ENCODE measurements at regions of chr19 and their contacts with region 1.

Region 1: DNA sequence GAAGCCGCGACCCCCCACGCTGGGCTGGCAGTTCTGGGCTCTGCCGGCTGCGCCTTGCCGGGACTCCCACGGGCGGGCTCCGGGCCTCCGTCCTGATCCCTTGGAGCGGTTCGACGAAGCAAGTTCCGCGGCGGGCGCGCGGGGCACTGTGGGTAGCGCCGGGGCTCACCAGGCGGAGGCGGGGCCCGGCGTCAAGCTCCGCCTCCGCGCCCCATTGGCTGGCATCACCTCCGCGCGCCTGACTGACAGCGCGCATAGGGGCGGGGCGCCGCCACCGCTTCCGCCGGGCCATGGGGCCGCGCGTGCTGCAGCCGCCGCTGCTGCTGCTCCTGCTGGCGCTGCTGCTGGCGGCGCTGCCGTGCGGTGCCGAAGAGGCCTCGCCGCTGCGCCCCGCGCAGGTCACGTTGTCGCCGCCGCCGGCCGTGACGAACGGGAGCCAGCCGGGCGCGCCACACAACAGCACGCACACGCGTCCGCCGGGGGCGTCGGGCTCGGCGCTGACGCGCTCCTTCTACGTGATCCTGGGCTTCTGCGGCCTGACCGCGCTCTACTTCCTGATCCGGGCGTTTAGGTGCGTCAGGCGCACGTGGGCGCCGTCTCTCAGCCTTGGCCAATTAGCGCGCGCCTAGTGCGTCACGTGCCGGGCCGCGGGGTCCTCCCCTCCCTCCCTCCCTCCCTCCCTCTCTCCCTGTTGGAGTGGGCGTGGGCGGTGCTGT is at the start of gene FAM174C:
- DNase-seq: peak; percentile 96
- H3K4me3 Mint-ChIP-seq: peak within 1 kb of the TSS; percentile 87
- H3K27ac Mint-ChIP-seq: peak within 1 kb of the TSS; percentile 94
- H3K4me1 Mint-ChIP-seq: peaks cover 55% of the 10 kb centered on the region
- H3K27me3 Mint-ChIP-seq: no peaks in the 10 kb centered on the region
- total RNA-seq, gene FAM174C: 62.8 to 65.3 TPM

Region 2: DNA sequence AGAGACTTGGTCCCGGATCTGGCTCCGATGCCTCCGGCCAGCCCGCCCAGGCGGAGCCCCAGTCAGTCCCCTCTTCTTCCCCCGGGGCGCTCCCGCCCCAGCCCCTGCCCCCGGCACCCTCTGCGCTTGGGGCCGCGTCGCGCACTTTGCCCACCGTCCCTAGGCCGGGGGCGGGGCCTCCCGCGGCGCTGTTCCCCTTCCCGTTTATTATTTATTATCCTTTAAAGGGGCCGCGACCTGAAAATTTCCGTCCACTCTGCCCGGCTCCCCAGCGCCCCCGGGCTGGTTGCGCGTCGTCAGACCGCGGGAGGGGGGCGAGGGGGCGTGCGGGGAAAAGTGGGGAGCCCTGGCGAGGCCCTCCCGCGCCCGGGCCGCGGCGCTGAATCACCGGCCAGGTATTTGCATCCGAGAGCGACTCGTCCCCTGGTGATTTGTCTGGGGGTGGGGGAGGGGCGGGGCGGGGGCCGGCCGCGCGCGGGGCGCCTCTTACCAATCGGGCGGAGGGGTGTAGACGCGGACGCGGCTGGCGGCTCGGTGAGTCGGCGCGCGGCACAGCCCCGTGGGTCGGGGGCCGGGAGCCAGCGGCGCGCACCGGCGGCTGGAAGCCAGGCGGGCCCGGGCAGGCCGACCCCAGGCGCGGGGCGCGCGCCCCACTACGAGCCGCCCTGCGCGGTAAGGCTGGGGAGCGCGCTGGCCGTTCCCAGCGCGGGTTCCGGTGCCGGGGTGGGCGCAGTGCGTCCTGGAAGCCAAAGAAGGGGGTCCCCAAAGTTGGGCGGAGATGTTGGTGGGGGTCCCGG is 349.7 kb before region 1 on chr19 and contains the start of gene ARID3A:
- CTCF ChIA-PET with region 1: no interaction called
- intact Hi-C with region 1: no loop called
- DNase-seq: peak; percentile 76
- H3K4me3 Mint-ChIP-seq: peak within 1 kb of the TSS; percentile 73
- H3K27ac Mint-ChIP-seq: peak within 1 kb of the TSS; percentile 56
- H3K4me1 Mint-ChIP-seq: peaks cover 13% of the 10 kb centered on the region
- H3K27me3 Mint-ChIP-seq: no peaks in the 10 kb centered on the region
- total RNA-seq, gene ARID3A: 23.1 to 28.4 TPM

Region 3: GRCh38 chr19:1230585-1231489 is 44.6 kb before region 1 on chr19:
- CTCF ChIA-PET with region 1: no interaction called
- intact Hi-C with region 1: no loop called
- DNase-seq: no peak
- H3K4me3 Mint-ChIP-seq: no peak overlapping the region
- H3K27ac Mint-ChIP-seq: no peak overlapping the region
- H3K4me1 Mint-ChIP-seq: no peaks in the 10 kb centered on the region
- H3K27me3 Mint-ChIP-seq: no peaks in the 10 kb centered on the region

Region 4: GRCh38 chr19:1241417-1242095 is 33.9 kb before region 1 on chr19 and contains the start of gene ATP5F1D:
- CTCF ChIA-PET with region 1: interaction called, 25 read pairs
- intact Hi-C with region 1: no loop called
- DNase-seq: peak; percentile 94
- H3K4me3 Mint-ChIP-seq: peak within 1 kb of the TSS; percentile 84
- H3K27ac Mint-ChIP-seq: peak within 1 kb of the TSS; percentile 86
- H3K4me1 Mint-ChIP-seq: peaks cover 43% of the 10 kb centered on the region
- H3K27me3 Mint-ChIP-seq: peaks cover 10% of the 10 kb centered on the region
- total RNA-seq, gene ATP5F1D: 153 TPM

Region 5: DNA sequence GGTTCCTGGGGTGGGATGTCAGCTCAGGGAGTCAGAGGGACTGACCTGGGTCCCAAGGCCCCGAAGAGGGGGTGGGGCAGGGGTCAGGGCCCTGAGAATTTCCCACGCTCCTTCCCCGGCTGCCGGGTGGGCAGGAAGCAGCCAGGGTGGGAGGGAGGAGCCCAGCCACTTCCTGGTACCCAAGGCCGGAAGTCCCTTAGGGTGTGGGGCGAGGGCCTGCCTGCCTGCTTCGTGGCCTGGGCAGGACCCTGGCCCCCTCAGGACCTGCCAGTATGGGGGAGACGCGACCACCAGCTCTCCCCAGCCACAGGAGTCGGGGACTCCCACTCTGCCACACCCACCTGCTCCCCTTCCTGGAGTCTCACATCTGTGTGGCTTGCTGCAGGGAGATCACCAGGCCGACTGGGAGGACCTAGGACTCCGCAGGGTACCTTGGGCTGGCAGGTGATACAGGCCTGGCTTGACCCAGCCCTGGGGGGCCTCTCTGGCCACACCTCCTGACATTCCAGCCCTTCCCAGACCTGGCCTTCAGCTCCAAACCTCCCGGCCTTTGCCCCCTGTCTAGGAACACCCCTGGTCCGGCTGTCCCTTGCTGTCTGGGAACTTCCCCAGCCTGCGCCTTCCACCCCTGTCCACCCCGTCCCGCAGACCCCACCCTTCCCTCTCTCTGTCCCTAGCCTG is 16.1 kb before region 1 on chr19:
- CTCF ChIA-PET with region 1: no interaction called
- intact Hi-C with region 1: no loop called
- DNase-seq: peak; percentile 80
- H3K4me3 Mint-ChIP-seq: peak overlapping the region; percentile 92
- H3K27ac Mint-ChIP-seq: peak overlapping the region; percentile 97
- H3K4me1 Mint-ChIP-seq: peaks cover 49% of the 10 kb centered on the region
- H3K27me3 Mint-ChIP-seq: no peaks in the 10 kb centered on the region

Region 6: DNA sequence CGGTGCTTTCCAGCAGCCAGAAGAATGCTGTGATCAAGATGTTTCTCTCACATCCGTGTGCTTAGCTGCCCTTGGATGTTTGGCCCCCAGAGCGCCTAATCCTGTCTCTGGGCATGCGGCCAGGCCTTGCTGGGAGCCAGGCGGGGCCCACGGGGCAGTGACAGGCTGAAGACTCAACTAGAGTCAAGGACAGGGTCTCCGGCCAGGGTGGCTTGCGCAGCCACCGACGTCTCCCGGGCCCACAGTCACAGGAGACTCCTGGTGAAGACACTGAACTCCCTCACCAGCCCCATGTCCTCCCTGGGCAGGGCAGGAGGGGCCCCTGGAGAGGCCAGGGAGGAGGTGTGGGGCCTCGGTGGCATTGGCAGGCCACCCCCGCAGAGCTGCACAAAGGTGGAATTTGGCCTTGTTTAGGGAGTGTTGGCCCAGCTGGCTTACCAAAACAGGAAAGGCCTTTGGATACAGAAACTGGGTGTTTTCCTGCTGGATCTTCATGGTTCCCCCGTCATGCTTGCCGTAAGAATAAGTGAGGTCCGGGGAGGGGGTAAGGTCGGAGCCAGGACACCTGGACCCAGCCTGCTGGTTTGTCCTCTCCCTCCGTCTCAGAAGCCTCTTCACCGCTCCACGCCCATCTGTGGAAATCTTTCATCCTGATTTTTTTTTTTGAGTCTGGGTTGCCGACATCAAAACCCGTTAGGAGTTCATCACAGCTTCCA is 98.3 kb after region 1 on chr19:
- CTCF ChIA-PET with region 1: no interaction called
- intact Hi-C with region 1: loop called (anchors 1 kb)
- DNase-seq: no peak
- H3K4me3 Mint-ChIP-seq: no peak overlapping the region
- H3K27ac Mint-ChIP-seq: no peak overlapping the region
- H3K4me1 Mint-ChIP-seq: no peaks in the 10 kb centered on the region
- H3K27me3 Mint-ChIP-seq: no peaks in the 10 kb centered on the region

Region 7: GRCh38 chr19:1406774-1407499 is 131.5 kb after region 1 on chr19:
- CTCF ChIA-PET with region 1: interaction called, 3 read pairs
- intact Hi-C with region 1: loop called (anchors 1 kb)
- DNase-seq: peak; percentile 98
- H3K4me3 Mint-ChIP-seq: peak overlapping the region; percentile 69
- H3K27ac Mint-ChIP-seq: peak overlapping the region; percentile 81
- H3K4me1 Mint-ChIP-seq: peaks cover 43% of the 10 kb centered on the region
- H3K27me3 Mint-ChIP-seq: peaks cover 5% of the 10 kb centered on the region

Region 8: GRCh38 chr19:1445185-1445931 is 169.9 kb after region 1 on chr19:
- CTCF ChIA-PET with region 1: no interaction called
- intact Hi-C with region 1: loop called (anchors 2 kb)
- DNase-seq: peak; percentile 79
- H3K4me3 Mint-ChIP-seq: peak overlapping the region; percentile 62
- H3K27ac Mint-ChIP-seq: no peak overlapping the region
- H3K4me1 Mint-ChIP-seq: peaks cover 28% of the 10 kb centered on the region
- H3K27me3 Mint-ChIP-seq: peaks cover 29% of the 10 kb centered on the region

Region 9: GRCh38 chr19:1592755-1593500 is 317.5 kb after region 1 on chr19 and contains the start of gene MBD3:
- CTCF ChIA-PET with region 1: no interaction called
- intact Hi-C with region 1: loop called (anchors 10 kb)
- DNase-seq: peak; percentile 84
- H3K4me3 Mint-ChIP-seq: peak within 1 kb of the TSS; percentile 96
- H3K27ac Mint-ChIP-seq: peak within 1 kb of the TSS; percentile 82
- H3K4me1 Mint-ChIP-seq: peaks cover 20% of the 10 kb centered on the region
- H3K27me3 Mint-ChIP-seq: no peaks in the 10 kb centered on the region
- total RNA-seq, gene MBD3: 58.1 to 63.7 TPM